Activated T-helper 1 cell treated with anti-CD3 and anti-CD28 coated beads, Interleukin-12 subunit alpha, Interleukin-12 subunit beta, Interleukin-2, Interleukin-4 antibody, amounts not matched to agents 30 ng/mL and 10 ng/mL and 1 ng/mL, durations not matched to agents 14 hours and 24 hours and 36 hours (primary cell): ENCODE measurements at regions of chr9 and their contacts with region 1.

Region 1: DNA sequence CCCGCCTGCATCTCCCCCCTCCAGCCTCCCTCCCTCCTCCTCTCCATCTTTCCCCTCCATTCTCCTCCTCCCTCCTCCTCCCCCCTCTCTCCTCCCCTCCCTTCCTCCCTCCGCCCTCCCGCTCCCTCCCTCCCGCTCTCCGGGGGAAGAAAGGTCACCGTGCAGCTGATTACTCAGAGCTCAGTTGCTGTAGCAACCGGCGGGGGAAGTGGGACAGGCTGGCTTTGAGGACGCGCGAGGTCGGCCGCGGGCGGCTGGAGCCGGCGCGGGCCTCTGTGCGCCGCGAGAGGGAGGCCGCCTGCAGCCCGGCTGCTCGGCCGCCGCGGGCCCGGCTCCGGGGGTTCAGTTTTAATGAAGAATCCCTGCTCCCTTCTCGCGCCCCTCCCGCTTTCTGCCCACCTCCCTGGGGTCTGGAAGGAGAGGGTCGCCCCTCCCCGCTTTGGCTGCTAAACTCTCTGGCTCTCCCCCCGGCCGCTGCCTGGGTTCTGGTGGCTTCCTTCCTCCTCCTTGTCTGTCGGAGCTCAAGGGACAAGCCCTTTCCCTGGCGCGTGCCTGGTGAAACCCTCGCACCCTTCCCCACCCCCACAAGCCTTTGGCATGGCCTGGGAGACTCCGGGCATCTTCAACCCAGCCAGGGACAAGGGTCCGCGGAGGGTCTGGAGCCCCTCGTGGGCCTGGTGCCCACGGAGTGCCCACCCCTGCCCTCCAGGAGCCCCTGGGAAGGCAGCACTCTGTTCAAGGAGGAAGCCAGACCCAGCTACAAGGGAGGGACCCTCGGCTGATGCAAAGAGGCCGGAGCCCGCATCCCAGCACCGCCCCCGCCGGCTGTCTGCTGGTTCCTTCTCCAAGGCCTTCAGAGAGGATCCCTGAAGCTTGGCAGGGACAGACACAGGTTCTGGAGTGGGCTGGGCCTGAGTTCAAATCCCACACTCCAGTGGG is 160.3 kb downstream of the C9orf50 start:
- DNase-seq: peak; percentile 83
- H3K4me3 Mint-ChIP-seq: peak overlapping the region; percentile 74
- H3K27ac Mint-ChIP-seq: peak overlapping the region; percentile 91
- H3K4me1 Mint-ChIP-seq: peaks cover 39% of the 10 kb centered on the region
- H3K27me3 Mint-ChIP-seq: peaks cover 1% of the 10 kb centered on the region

Region 2: GRCh38 chr9:129182625-129183495 is 277.7 kb before region 1 on chr9:
- intact Hi-C with region 1: no loop called
- DNase-seq: no peak
- H3K4me3 Mint-ChIP-seq: no peak overlapping the region
- H3K27ac Mint-ChIP-seq: no peak overlapping the region
- H3K4me1 Mint-ChIP-seq: peaks cover 7% of the 10 kb centered on the region
- H3K27me3 Mint-ChIP-seq: peaks cover 3% of the 10 kb centered on the region

Region 3: DNA sequence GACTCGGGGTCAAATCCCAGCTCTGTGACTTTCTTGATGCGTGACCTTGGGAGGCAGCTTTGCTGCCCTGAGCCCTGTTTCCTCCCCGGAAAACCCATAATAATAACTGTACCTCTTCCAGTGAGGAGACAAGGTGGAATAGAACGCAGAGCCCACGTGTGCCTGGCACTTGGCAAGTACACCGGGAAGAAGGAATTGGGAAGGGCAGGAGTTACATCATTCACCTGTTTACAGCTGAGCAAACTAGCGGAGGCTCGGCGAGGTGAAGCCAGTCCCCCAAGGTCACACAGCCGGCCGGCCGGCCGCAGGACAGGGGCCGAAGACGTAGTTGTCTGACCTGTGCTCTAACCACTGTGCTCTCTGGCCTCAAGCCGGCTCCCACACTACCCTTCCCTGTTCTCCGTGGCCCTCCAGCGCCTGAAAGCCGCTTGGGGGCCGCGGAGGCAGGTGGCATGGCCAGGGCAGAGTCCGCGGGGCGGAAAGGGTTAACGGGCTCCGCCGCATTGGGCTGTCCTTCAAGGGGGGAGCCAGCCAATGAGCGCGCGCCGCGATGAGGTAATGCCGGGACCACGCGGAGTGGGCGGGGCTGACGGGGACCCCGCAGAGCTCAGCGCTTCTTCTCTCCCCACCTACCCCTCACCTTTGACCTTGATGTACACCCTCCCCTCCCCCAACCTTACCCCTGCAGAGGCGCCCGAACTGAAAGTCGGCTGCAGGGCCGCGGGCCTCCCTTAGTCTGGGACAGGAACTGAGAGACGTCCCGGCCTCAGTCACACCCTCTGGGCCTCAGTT is 35.1 kb after region 1 on chr9:
- intact Hi-C with region 1: loop called (anchors 2 kb)
- DNase-seq: peak; percentile 82
- H3K4me3 Mint-ChIP-seq: peak overlapping the region; percentile 81
- H3K27ac Mint-ChIP-seq: peak overlapping the region; percentile 77
- H3K4me1 Mint-ChIP-seq: peaks cover 32% of the 10 kb centered on the region
- H3K27me3 Mint-ChIP-seq: no peaks in the 10 kb centered on the region

Region 4: GRCh38 chr9:130186839-130187522 is 726.4 kb after region 1 on chr9:
- intact Hi-C with region 1: no loop called
- DNase-seq: no peak
- H3K4me3 Mint-ChIP-seq: no peak overlapping the region
- H3K27ac Mint-ChIP-seq: no peak overlapping the region
- H3K4me1 Mint-ChIP-seq: no peaks in the 10 kb centered on the region
- H3K27me3 Mint-ChIP-seq: peaks cover 2% of the 10 kb centered on the region